Thyroid gland (tissue), 4 donors: ENCODE measurements at regions of chr5 and their contacts with region 1.

Region 1: DNA sequence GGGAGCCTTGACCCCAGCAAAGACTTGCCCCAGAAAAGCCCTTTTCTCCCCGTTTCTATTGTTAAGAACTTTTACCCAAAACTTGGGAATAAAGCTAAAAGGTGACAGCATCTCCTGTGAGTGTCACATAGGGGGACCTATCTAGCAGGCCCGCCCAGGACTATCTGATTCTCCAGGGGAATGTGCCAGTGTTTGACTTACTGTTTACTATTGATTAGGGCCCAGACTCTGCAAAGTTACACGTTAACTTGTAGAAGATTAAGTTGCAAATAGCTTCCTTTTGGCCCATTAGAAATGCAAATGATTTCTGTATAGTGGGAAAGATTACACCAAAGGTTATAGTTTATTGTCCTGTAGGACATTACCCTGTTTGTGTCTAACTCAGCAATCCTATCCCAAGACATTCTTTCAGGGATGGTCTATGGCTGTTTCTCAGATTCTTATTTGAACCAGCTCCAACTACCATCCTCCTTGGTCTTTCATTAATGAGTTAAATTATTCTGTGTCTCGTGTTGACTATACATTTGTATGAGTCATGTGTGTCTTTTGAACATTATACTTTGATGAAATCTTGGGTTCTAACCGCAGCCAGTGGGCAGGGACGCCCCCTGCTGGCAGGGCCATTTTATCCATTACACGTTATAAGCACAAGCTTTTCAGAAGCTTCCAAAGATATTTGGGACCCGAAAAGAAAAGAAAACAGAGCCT is 60.7 kb downstream of the HRH2 start:
- DNase-seq: peak; percentile 50 to 56
- H3K4me3 ChIP-seq: no peak overlapping the region
- H3K27ac ChIP-seq: no peak overlapping the region
- H3K4me1 ChIP-seq: no peaks in the 10 kb centered on the region
- H3K27me3 ChIP-seq: no peaks in the 10 kb centered on the region
- CTCF ChIP-seq: peak in 5 of 6 experiments; percentile 47 to 67 (median 47)
- POLR2A ChIP-seq: no peak

Region 2: DNA sequence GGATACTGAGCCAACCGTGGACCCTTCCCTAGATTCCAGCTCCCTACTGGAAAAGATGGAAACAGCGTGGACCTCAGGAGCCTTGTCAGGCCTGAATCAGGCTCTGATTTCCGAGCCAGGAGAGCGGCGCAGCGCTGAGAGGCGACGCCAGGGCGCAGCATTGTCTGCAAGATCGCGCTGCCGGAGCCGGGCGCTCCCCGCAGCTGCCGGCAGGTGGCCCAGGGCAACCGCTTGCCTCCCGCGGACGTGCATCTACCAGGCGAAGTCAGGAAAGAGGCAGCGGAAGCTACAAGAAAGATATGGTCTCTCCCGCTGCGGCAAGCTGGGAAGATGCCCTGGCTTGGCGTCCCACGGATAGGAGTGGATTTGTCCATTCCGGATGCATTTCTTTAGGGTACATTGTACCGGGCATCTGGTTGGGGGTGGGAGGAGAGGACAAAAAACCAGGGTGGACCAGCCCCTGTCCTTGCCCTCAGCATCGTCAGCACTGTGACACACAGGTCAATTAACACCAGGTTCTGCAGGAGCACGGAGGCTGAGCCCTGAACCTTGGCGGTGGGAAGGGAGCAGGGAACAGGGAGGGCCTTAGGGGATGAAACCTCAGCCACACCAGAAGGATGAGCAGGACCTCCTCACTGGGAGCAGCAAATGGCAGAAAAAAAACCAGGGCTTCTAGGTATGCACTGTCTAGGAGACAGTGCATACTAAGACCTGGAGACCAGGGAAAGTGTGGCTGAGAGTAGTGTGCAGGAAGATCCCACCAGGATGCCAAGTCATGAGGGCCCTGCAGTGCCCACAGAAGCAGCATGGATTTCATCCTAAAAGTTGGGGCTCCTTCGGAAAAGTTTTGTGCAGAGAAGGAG is 184.3 kb before region 1 on chr5:
- intact Hi-C with region 1: loop called (anchors 10 kb)
- DNase-seq: peak; percentile 62 to 64
- H3K4me3 ChIP-seq: no peak overlapping the region
- H3K27ac ChIP-seq: no peak overlapping the region
- H3K4me1 ChIP-seq: peaks cover 0 to 6% of the 10 kb centered on the region in 2 donors
- H3K27me3 ChIP-seq: no peaks in the 10 kb centered on the region
- CTCF ChIP-seq: peak; percentile 66 to 97 (median 90)
- POLR2A ChIP-seq: no peak

Region 3: GRCh38 chr5:175842951-175843793 is 124.6 kb after region 1 on chr5:
- intact Hi-C with region 1: no loop called
- DNase-seq: no peak
- H3K4me3 ChIP-seq: no peak overlapping the region
- H3K27ac ChIP-seq: no peak overlapping the region
- H3K4me1 ChIP-seq: no peaks in the 10 kb centered on the region
- H3K27me3 ChIP-seq: no peaks in the 10 kb centered on the region
- CTCF ChIP-seq: no peak
- POLR2A ChIP-seq: no peak